Activated T-helper 1 cell treated with anti-CD3 and anti-CD28 coated beads, Interleukin-12 subunit alpha, Interleukin-12 subunit beta, Interleukin-2, Interleukin-4 antibody, amounts not matched to agents 30 ng/mL and 10 ng/mL and 1 ng/mL, durations not matched to agents 14 hours and 24 hours and 36 hours (primary cell): ENCODE measurements at regions of chr17 and their contacts with region 1.

Region 1: DNA sequence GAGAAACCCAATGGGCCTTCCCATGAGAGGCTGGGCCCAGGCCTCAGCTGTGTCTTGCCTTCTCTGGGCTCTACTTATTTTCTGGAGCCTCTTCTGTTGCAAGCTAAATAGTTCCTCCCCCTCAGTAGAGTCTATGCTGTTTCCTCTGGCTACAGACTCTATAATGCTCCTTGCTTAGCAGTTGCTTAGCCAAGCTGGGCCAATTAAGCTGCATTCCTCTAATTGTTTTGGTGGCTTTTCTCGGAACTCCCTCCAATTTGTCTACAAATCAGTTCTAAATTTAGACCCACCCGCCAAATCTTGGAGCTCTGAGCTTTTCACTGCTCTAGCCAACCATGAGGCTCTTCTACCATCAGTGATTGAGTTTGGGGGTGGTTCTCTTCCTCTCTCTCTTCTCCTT is 302.7 kb upstream of the ASIC2 start:
- DNase-seq: no peak
- H3K4me3 Mint-ChIP-seq: no peak overlapping the region
- H3K27ac Mint-ChIP-seq: no peak overlapping the region
- H3K4me1 Mint-ChIP-seq: no peaks in the 10 kb centered on the region
- H3K27me3 Mint-ChIP-seq: no peaks in the 10 kb centered on the region

Region 2: DNA sequence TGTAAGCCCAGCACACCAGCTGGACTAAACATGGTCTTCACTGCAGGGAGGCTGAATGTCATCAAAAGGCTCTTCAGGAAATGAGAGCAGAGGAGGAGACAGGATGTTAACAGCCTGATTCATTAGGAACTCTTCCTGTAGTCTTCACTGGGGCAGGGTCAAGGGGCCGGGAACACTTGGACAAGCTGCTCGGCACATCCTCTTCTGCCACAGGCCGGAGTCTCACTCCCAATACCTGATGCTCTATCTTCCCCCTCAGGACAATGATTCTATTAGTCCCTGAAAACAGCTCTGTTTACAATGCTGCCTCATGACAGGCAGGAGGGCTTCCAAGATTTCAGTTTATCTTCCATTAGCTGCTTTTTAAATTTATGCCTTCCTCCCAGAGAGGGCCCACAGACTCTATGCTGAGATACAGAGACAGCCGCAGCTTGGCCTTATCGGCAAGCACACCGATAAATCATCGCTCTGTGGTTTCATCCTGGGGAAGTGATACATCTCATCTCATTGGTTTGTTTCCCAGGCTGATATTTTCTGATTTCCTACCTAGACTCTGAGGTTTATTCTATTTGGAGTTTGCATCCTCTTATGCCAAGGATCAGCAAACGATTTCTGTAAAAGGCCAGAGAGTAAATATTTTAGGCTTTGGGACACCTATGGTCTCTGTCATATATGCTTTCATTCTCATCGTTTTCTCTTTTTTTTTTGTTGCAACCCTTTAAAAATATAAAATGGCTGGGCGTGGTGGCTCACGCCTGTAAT is 88.8 kb before region 1 on chr17:
- intact Hi-C with region 1: no loop called
- DNase-seq: no peak
- H3K4me3 Mint-ChIP-seq: no peak overlapping the region
- H3K27ac Mint-ChIP-seq: peak overlapping the region; percentile 20
- H3K4me1 Mint-ChIP-seq: peaks cover 10% of the 10 kb centered on the region
- H3K27me3 Mint-ChIP-seq: peaks cover 8% of the 10 kb centered on the region

Region 3: GRCh38 chr17:33531311-33531710 is 64.5 kb before region 1 on chr17:
- intact Hi-C with region 1: loop called (anchors 10 kb)
- DNase-seq: no peak
- H3K4me3 Mint-ChIP-seq: no peak overlapping the region
- H3K27ac Mint-ChIP-seq: no peak overlapping the region
- H3K4me1 Mint-ChIP-seq: no peaks in the 10 kb centered on the region
- H3K27me3 Mint-ChIP-seq: no peaks in the 10 kb centered on the region